Activated T-helper 2 cell treated with anti-CD3 and anti-CD28 coated beads, Interferon-gamma antibody, Interleukin-2, Interleukin-4, amounts not matched to agents 10 μg/mL and 5 μg/mL and 100 μg/mL, durations not matched to agents 14 hours and 24 hours and 36 hours (primary cell): ENCODE measurements at regions of chr7 and their contacts with region 1.

Region 1: GRCh38 chr7:56003749-56004148 is 39.4 kb downstream of the NIPSNAP2 start:
- DNase-seq: no peak
- H3K4me3 Mint-ChIP-seq: no peak overlapping the region
- H3K27ac Mint-ChIP-seq: no peak overlapping the region
- H3K4me1 Mint-ChIP-seq: peaks cover 16% of the 10 kb centered on the region
- H3K27me3 Mint-ChIP-seq: no peaks in the 10 kb centered on the region

Region 2: DNA sequence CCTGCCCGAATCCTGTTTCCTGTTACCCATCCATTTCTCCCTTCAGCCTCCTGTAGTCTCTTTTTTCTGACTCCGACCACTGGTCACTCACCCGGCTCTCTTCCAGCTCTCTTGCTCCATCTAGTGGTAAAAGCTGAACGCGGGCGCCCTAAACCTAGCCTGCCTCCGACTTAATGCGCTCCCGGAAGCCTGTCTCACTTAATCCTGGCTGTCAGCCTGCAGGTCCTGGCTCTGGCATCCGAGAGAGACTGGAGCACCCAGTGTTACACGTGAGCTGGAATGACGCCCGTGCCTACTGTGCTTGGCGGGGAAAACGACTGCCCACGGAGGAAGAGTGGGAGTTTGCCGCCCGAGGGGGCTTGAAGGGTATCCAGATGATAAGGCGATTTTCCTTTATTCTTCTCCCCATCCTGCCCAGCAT is 70.6 kb after region 1 on chr7:
- intact Hi-C with region 1: loop called (anchors 1 kb)
- DNase-seq: peak; percentile 55
- H3K4me3 Mint-ChIP-seq: no peak overlapping the region
- H3K27ac Mint-ChIP-seq: peak overlapping the region; percentile 13
- H3K4me1 Mint-ChIP-seq: peaks cover 4% of the 10 kb centered on the region
- H3K27me3 Mint-ChIP-seq: no peaks in the 10 kb centered on the region